ENCODE measurements at regions of chr22 and their contacts with region 1.

Region 1: GRCh38 chr22:17171313-17172171 is 12.5 kb upstream of the HDHD5 start:
- DNase-seq: peak; percentile 77 to 90 (median 84)
- H3K4me3 ChIP-seq: peak overlapping the region; percentile 39 to 84 (median 71)
- H3K27ac ChIP-seq: peak overlapping the region; percentile 83 to 99 (median 95)
- H3K27me3 ChIP-seq: no peaks in the 10 kb centered on the region
- CTCF ChIP-seq: peak; percentile 48 to 99 (median 76)

Region 2: GRCh38 chr22:16917144-16918003 is 254.2 kb before region 1 on chr22:
- intact Hi-C with region 1: no loop called
- DNase-seq: peak; percentile 57 to 85 (median 70)
- H3K4me3 ChIP-seq: no peak overlapping the region
- H3K27ac ChIP-seq: no peak overlapping the region
- H3K27me3 ChIP-seq: peaks cover 0 to 39% (median 7%) of the 10 kb centered on the region in 45 donors
- CTCF ChIP-seq: peak; percentile 53 to 86 (median 70)

Region 3: GRCh38 chr22:17077255-17077654 is 94.3 kb before region 1 on chr22:
- intact Hi-C with region 1: loop called (anchors 5 kb)
- DNase-seq: no peak
- H3K4me3 ChIP-seq: no peak overlapping the region
- H3K27ac ChIP-seq: no peak overlapping the region
- H3K27me3 ChIP-seq: peaks cover 0 to 5% (median 0%) of the 10 kb centered on the region in 45 donors
- CTCF ChIP-seq: no peak

Region 4: GRCh38 chr22:17121227-17122195 is 50.0 kb before region 1 on chr22 and contains the start of gene TMEM121B:
- intact Hi-C with region 1: loop called in 1 of 2 experiments (anchors 5 kb)
- DNase-seq: peak; percentile 43 to 89 (median 80)
- H3K4me3 ChIP-seq: peak within 1 kb of the TSS; percentile 52 to 85 (median 68)
- H3K27ac ChIP-seq: peak within 1 kb of the TSS in 55 of 59 donors; percentile 36 to 95 (median 84)
- H3K27me3 ChIP-seq: no peaks in the 10 kb centered on the region
- CTCF ChIP-seq: peak in 1 of 56 donors; percentile 18
- total RNA-seq, gene TMEM121B: 5.0 to 22.9 (median 14.6) TPM

Region 5: DNA sequence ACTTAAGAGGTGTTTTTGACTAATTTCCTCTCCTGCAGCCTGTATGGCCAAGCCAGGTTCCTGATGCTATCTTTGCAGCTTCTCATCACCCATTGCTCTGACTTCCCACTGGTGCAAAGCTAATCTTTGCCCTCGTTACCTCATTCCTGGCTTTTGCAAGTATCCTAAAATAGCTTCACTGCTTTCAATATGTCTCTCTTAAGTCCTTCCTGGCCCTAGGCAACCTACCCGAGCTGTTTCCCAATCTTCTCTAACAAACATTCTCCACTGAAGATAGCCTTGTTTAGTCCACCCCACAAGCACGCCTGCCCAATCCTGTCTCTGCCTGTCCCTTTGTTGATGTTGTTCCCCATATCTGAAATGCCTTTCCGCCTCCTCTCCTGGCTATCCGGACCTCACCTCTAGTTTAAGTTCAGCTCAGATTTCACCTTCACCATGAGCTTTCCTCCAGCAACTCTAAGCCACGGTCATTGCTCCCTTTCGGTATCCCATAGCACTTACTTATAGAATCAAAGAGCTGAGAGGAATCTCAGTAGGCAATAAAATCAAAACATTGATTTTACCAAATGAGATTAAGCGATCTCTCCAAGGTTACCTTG is 167.7 kb after region 1 on chr22:
- intact Hi-C with region 1: no loop called
- DNase-seq: no peak
- H3K4me3 ChIP-seq: no peak overlapping the region
- H3K27ac ChIP-seq: no peak overlapping the region
- H3K27me3 ChIP-seq: peaks cover 0 to 10% (median 0%) of the 10 kb centered on the region in 45 donors
- CTCF ChIP-seq: no peak

Region 6: GRCh38 chr22:17368554-17369438 is 197.3 kb after region 1 on chr22:
- intact Hi-C with region 1: loop called (anchors 5 kb)
- DNase-seq: peak; percentile 41 to 67 (median 54)
- H3K4me3 ChIP-seq: peak overlapping the region; percentile 34 to 84 (median 68)
- H3K27ac ChIP-seq: peak overlapping the region; percentile 13 to 95 (median 89)
- H3K27me3 ChIP-seq: peaks cover 0 to 66% (median 18%) of the 10 kb centered on the region in 45 donors
- CTCF ChIP-seq: peak in 5 of 56 donors; percentile 5 to 19 (median 7)

Region 7: DNA sequence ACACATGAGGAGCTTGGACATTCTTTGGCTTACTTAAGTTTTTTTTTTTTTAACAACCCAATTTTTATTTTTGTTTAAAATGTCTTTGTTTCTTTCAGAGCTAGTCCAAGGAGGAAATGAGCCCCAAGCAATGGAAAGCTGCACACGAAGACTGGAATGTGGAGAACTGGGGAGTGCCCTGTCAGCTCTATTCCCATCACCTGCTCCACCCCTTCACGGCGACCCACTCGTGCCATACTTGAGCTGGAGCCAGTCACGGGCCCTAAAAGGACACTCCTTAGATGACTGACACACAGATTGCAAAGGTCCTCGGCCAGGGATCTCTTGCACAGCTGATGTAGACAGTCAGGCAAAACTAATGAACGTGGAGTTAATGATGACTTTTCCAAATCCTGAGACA is 381.2 kb after region 1 on chr22:
- intact Hi-C with region 1: no loop called
- DNase-seq: no peak
- H3K4me3 ChIP-seq: no peak overlapping the region
- H3K27ac ChIP-seq: no peak overlapping the region
- H3K27me3 ChIP-seq: no peaks in the 10 kb centered on the region
- CTCF ChIP-seq: no peak